ENCODE measurements at regions of chr11 and their contacts with region 1.

Region 1: DNA sequence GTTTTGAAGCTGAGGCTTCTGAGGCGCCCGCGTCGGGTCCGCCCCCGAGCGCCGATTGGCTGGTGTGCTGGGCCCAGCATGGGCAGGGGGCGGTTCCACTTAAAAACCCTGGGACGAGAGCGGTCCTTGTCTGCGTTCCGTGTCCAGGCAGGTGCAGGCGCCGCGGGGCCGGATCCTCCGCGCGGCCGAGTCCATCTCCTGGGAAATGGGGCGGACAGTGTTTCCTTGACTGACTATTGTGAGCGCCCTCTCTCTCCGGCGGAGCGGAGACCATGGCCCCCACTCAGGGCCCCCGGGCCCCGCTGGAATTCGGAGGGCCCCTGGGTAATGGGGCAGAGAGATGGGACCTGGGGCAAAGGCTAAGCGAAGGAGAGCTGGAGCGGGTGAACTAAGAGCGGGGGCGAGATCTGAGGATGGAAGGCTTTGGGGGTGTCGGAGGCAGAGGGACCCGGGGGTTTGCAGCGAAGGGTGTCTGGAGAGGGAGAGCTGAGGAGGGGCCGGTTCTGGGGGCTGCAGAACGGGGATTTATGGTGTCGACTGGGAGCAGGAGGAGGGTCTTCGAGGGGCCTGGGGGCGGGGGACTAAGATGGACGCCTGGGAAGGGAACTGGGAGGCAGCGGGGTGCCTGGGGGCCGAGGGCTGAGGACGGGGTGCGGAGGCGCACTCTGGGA is at the start of gene TM7SF2:
- DNase-seq: peak; percentile 93
- ATAC-seq: peak; percentile 79
- H3K4me3 ChIP-seq: peak within 1 kb of the TSS; percentile 65 to 98 (median 95)
- H3K27ac ChIP-seq: peak within 1 kb of the TSS; percentile 61
- H3K4me1 ChIP-seq: peaks cover 36% of the 10 kb centered on the region
- H3K27me3 ChIP-seq: no peaks in the 10 kb centered on the region
- CTCF ChIP-seq: peak; percentile 11; the same call in 1 of the 2 replicates
- EP300 ChIP-seq: no peak
- POLR2A ChIP-seq: peak in 1 of 2 experiments; percentile 98; a peak in 2 of 4 replicates
- RAD21 ChIP-seq: no peak
- total RNA-seq, gene TM7SF2: 28.8 and 66.9 TPM in 2 replicates

Region 2: DNA sequence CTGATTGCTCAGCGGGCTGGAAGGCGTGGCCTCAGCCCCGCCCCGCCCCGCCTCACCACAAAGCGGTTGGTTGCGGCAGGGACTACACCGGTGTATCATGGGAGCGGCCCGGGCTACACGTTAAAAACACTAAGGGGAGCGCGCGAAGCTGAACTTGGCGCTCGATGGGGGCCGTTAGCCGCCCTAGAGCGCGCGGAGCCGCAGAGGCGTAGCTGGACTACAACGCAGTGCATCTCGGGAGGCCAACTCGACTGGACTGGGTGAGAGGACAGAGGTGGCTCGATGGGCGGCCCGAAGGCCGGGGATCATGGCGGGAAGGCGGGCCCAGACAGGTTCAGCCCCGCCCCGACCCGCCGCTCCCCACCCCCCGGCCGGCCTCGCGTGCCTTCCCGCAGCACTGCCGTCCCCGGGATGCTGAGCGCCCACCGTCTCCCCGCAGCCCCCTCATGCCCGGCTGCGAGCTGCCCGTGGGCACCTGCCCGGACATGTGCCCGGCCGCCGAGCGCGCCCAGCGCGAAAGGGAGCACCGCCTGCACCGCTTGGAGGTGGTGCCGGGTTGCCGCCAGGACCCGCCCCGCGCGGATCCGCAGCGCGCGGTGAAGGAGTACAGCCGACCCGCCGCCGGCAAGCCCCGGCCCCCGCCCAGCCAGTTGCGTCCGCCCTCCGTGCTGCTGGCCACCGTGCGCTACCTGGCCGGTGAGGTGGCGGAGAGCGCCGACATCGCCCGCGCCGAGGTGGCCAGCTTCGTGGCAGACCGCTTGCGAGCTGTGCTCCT is 70.8 kb before region 1 on chr11 and contains the start of gene SAC3D1:
- CTCF ChIA-PET with region 1: no interaction called
- POLR2A ChIA-PET with region 1: interaction called, 15 read pairs
- in situ Hi-C with region 1: no loop called
- intact Hi-C with region 1: no loop called
- DNase-seq: peak; percentile 95
- ATAC-seq: peak; percentile 94
- H3K4me3 ChIP-seq: peak within 1 kb of the TSS; percentile 76 to 89 (median 81)
- H3K27ac ChIP-seq: peak within 1 kb of the TSS; percentile 87
- H3K4me1 ChIP-seq: peaks cover 24% of the 10 kb centered on the region
- H3K27me3 ChIP-seq: no peaks in the 10 kb centered on the region
- CTCF ChIP-seq: peak; percentile 10; the same call in 1 of the 2 replicates
- EP300 ChIP-seq: no peak
- POLR2A ChIP-seq: peak; percentile 13 to 66; a peak in 3 of 4 replicates
- RAD21 ChIP-seq: peak; percentile 44
- total RNA-seq, gene SAC3D1: 33.2 and 36.3 TPM in 2 replicates

Region 3: DNA sequence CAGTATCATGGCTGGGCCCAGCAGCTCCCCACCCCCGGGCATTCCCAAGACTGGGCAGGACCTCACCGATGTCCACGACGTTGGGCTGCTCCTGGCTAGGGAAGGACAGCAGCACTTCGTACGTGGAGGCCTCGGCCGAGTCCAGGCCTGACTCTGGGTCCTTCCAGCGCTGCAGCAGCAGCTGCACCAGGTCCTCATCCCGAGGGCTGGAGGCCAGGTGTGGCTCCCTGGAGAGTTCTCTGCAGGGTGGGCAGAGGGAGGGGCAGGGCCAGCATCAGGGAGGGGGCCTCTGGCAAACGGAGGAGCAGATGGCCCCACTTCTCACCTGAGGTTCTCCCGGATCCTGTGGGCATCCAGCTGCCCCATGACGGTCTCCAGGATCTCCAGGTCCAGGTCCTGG is 53.9 kb before region 1 on chr11:
- CTCF ChIA-PET with region 1: no interaction called
- POLR2A ChIA-PET with region 1: no interaction called
- in situ Hi-C with region 1: no loop called
- intact Hi-C with region 1: no loop called
- DNase-seq: no peak
- ATAC-seq: peak; percentile 64
- H3K4me3 ChIP-seq: peak overlapping the region; percentile 32 to 75 (median 57); a peak in 5 of 6 replicates
- H3K27ac ChIP-seq: peak overlapping the region; percentile 24
- H3K4me1 ChIP-seq: peaks cover 61% of the 10 kb centered on the region
- H3K27me3 ChIP-seq: no peaks in the 10 kb centered on the region
- CTCF ChIP-seq: no peak
- EP300 ChIP-seq: no peak
- POLR2A ChIP-seq: no peak
- RAD21 ChIP-seq: peak; percentile 17; the same call in 1 of the 2 replicates

Region 4: GRCh38 chr11:65069217-65069616 is 42.7 kb before region 1 on chr11:
- CTCF ChIA-PET with region 1: no interaction called
- POLR2A ChIA-PET with region 1: interaction called, 10 read pairs
- in situ Hi-C with region 1: no loop called
- intact Hi-C with region 1: no loop called
- DNase-seq: peak; percentile 63
- ATAC-seq: no peak
- H3K4me3 ChIP-seq: no peak overlapping the region
- H3K27ac ChIP-seq: peak overlapping the region; percentile 29
- H3K4me1 ChIP-seq: peaks cover 36% of the 10 kb centered on the region
- H3K27me3 ChIP-seq: no peaks in the 10 kb centered on the region
- CTCF ChIP-seq: no peak
- EP300 ChIP-seq: no peak
- POLR2A ChIP-seq: no peak
- RAD21 ChIP-seq: no peak

Region 5: DNA sequence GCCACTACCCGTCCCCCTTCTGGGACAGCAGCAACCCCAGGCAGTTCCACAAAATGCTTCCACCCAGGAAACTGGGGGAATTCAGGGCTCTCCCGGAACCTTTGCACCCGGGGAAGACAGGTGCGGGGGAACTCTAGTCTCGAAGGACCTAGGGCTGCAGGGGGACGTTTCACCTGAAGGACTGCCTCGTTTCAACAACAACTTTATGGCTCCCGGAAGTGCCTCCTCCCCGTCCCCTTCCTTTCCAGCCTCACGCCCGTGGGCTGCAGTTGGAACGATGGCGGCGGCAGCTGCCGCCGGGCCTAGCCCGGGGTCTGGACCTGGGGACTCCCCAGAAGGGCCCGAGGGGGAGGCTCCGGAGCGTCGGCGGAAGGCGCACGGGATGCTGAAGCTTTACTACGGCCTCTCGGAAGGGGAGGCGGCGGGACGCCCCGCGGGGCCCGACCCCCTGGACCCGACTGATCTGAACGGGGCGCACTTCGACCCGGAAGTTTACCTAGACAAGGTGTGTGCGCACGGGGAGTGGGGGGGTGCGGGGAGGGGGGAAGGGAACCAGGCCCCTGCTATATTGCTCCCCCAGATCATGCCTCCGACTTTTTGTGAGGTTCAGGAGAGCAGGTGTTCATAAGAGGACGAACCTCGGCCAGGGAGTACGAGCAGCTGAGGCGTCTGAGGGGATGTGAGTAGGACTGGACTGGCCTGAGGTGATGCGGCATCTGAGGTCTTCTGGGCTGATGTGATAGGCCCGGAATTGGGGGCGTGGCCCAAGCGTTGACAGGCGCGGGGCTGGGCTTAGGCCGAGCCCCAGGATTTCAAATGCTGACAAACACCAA is 15.7 kb before region 1 on chr11 and contains the start of gene VPS51:
- CTCF ChIA-PET with region 1: no interaction called
- POLR2A ChIA-PET with region 1: interaction called, 86 read pairs
- in situ Hi-C with region 1: no loop called
- intact Hi-C with region 1: loop called (anchors 2 kb)
- DNase-seq: peak; percentile 87
- ATAC-seq: peak; percentile 98
- H3K4me3 ChIP-seq: peak within 1 kb of the TSS; percentile 78 to 85 (median 83)
- H3K27ac ChIP-seq: peak within 1 kb of the TSS; percentile 93
- H3K4me1 ChIP-seq: peaks cover 50% of the 10 kb centered on the region
- H3K27me3 ChIP-seq: no peaks in the 10 kb centered on the region; a peak in 1 of 5 replicates
- CTCF ChIP-seq: peak; percentile 28; the same call in 1 of the 2 replicates
- EP300 ChIP-seq: peak; percentile 61 to 68; a peak in 2 of 4 replicates
- POLR2A ChIP-seq: peak; percentile 83 to 88
- RAD21 ChIP-seq: peak; percentile 48; the same call in 1 of the 2 replicates
- total RNA-seq, gene VPS51: 57.4 and 76.3 TPM in 2 replicates

Region 6: GRCh38 chr11:65169164-65169641 is 57.3 kb after region 1 on chr11:
- CTCF ChIA-PET with region 1: no interaction called
- POLR2A ChIA-PET with region 1: interaction called, 26 read pairs
- in situ Hi-C with region 1: no loop called
- intact Hi-C with region 1: loop called (anchors 2 kb)
- DNase-seq: no peak
- ATAC-seq: peak; percentile 11; the same call in 2 of the 3 replicates
- H3K4me3 ChIP-seq: peak overlapping the region in 2 of 3 experiments; percentile 15 to 30; a peak in 2 of 6 replicates
- H3K27ac ChIP-seq: peak overlapping the region; percentile 55
- H3K4me1 ChIP-seq: peaks cover 82% of the 10 kb centered on the region
- H3K27me3 ChIP-seq: no peaks in the 10 kb centered on the region
- CTCF ChIP-seq: no peak
- EP300 ChIP-seq: no peak
- POLR2A ChIP-seq: no peak
- RAD21 ChIP-seq: no peak

Region 7: GRCh38 chr11:65180877-65181568 is 69.1 kb after region 1 on chr11:
- CTCF ChIA-PET with region 1: interaction called, 9 read pairs
- POLR2A ChIA-PET with region 1: interaction called, 43 read pairs
- in situ Hi-C with region 1: loop called (anchors 5 kb)
- intact Hi-C with region 1: loop called (anchors 2 kb)
- DNase-seq: peak; percentile 61
- ATAC-seq: peak; percentile 90
- H3K4me3 ChIP-seq: peak overlapping the region; percentile 82 to 94 (median 91)
- H3K27ac ChIP-seq: peak overlapping the region; percentile 77
- H3K4me1 ChIP-seq: peaks cover 25% of the 10 kb centered on the region
- H3K27me3 ChIP-seq: no peaks in the 10 kb centered on the region; a peak in 1 of 5 replicates
- CTCF ChIP-seq: peak; percentile 92
- EP300 ChIP-seq: no peak
- POLR2A ChIP-seq: peak in 1 of 2 experiments; percentile 47; a peak in 1 of 4 replicates
- RAD21 ChIP-seq: peak; percentile 69

Region 8: DNA sequence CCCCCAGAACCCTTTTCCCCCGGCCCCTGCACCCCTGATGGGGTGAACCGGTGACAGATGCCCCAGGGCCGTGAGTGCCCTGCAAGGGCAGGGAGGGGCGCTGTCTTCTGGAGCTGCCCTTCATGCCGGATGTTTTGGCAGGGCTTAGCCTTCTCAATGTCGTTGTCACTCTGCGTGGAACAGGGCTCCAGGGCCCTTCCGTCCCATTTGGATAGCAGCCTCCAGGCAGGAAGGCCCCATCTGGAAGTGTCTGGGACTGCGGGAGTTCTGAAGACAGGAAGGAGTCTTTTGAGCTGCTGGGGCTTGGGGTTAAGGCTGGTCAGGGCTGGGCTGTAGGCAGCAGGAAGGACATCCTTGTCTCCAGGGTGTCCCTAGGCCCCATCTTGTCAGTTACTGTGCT is 279.1 kb after region 1 on chr11:
- CTCF ChIA-PET with region 1: no interaction called
- POLR2A ChIA-PET with region 1: no interaction called
- in situ Hi-C with region 1: no loop called
- intact Hi-C with region 1: no loop called
- DNase-seq: no peak
- ATAC-seq: no peak
- H3K4me3 ChIP-seq: no peak overlapping the region
- H3K27ac ChIP-seq: no peak overlapping the region
- H3K4me1 ChIP-seq: peaks cover 28% of the 10 kb centered on the region
- H3K27me3 ChIP-seq: no peaks in the 10 kb centered on the region
- CTCF ChIP-seq: no peak
- EP300 ChIP-seq: no peak
- POLR2A ChIP-seq: no peak
- RAD21 ChIP-seq: no peak

Region 9: DNA sequence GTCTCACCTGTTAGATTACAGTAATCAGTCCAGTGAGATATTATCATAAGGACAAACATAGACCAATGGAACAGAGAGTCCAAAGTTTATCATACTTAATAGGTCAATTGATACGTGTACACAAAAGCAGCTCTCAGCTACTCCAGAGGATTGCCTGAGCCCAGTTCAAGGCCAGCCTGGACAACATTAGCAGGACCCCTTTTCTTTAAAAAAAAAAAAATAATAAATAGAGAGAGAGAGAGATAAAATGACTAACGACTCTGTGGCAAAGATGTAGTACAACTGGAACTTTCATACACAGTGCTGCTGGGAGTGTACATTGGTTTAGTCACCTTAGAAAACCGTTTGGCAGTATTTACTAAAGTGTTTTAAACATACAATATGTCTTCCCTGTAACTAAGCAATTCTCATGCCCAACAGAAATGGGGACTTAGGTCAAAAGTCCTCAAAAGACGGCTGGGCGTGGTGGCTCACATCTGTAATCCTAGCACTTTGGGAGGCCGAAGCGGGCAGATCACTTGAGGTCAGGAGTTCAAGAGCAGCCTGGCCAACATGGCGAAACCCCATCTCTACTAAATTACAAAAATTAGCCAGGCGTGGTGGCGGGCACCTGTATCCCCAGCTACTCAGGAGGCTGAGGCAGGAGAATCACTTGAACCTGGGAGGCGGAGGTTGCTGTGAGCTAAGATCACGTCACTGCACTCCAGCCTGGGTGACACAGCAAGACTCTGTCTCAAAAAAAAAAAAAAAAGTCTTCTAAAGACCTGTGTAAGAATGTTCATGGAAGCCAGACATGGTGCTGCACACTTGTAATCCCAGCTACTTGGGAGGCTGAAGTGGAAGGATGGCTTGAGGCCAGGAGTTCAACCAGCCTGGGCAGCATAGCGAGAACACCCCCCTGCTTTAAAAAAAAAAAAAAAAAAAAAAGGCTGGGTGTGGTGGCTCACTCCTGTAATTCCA is 732.6 kb after region 1 on chr11:
- CTCF ChIA-PET with region 1: no interaction called
- POLR2A ChIA-PET with region 1: no interaction called
- in situ Hi-C with region 1: no loop called
- intact Hi-C with region 1: no loop called
- DNase-seq: peak; percentile 80
- ATAC-seq: peak; percentile 68
- H3K4me3 ChIP-seq: peak overlapping the region in 1 of 3 experiments; percentile 41; a peak in 2 of 6 replicates
- H3K27ac ChIP-seq: peak overlapping the region; percentile 67
- H3K4me1 ChIP-seq: peaks cover 46% of the 10 kb centered on the region
- H3K27me3 ChIP-seq: no peaks in the 10 kb centered on the region
- CTCF ChIP-seq: no peak
- EP300 ChIP-seq: peak in 1 of 2 experiments; percentile 42; a peak in 2 of 4 replicates
- POLR2A ChIP-seq: no peak
- RAD21 ChIP-seq: no peak

Measured in HepG2 (cell line).